Esophagus squamous epithelium (tissue), 5 donors: ENCODE measurements at regions of chr6 and their contacts with region 1.

Region 1: GRCh38 chr6:157756708-157757429 is 66.2 kb upstream of the SNX9 start:
- DNase-seq: peak; percentile 26
- H3K4me3 ChIP-seq: peak overlapping the region in 1 of 4 donors; percentile 37
- H3K27ac ChIP-seq: peak overlapping the region in 3 of 4 donors; percentile 48 to 52 (median 50)
- H3K4me1 ChIP-seq: peaks cover 6 to 37% (median 22%) of the 10 kb centered on the region in 3 donors
- H3K27me3 ChIP-seq: peaks cover 0 to 24% (median 0%) of the 10 kb centered on the region in 4 donors
- CTCF ChIP-seq: peak; percentile 80 to 89 (median 84)
- POLR2A ChIP-seq: no peak

Region 2: DNA sequence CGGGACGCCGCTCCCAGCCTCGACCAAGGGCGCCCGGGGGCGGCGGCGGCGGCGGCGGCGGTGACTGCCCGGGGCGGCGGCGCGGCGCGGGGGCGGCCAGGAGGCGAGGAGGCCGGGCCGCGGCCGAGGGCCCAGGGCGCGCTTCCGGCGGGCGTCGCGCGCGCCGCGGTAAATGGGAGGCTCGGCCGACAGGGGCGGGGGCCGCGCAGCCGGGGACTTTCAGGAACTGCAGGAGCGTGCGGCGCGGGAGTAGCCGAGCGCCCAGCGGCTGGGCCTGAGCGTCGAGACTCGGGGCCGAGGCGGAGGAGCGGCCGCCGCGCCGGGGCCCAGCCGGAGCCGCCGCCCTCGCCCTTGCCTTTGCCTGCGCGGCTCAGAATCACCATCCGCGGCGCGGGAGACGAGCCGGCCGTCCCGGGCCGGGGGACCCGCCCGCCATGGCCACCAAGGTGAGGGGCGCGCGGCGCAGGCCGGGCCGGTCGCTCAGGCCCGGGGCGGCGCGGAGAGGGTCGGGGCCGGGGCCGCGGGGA is 66.2 kb after region 1 on chr6 and contains the start of gene SNX9:
- intact Hi-C with region 1: loop called (anchors 10 kb)
- DNase-seq: no peak
- H3K4me3 ChIP-seq: peak within 1 kb of the TSS; percentile 79 to 99 (median 98)
- H3K27ac ChIP-seq: peak within 1 kb of the TSS; percentile 91 to 99 (median 96)
- H3K4me1 ChIP-seq: peaks cover 11 to 29% (median 15%) of the 10 kb centered on the region in 3 donors
- H3K27me3 ChIP-seq: no peaks in the 10 kb centered on the region
- CTCF ChIP-seq: peak in 2 of 6 experiments; percentile 36 to 43
- POLR2A ChIP-seq: peak in 3 of 4 donors; percentile 39 to 91 (median 83)
- total RNA-seq, gene SNX9: 19.9 to 39.9 (median 33.5) TPM

Region 3: DNA sequence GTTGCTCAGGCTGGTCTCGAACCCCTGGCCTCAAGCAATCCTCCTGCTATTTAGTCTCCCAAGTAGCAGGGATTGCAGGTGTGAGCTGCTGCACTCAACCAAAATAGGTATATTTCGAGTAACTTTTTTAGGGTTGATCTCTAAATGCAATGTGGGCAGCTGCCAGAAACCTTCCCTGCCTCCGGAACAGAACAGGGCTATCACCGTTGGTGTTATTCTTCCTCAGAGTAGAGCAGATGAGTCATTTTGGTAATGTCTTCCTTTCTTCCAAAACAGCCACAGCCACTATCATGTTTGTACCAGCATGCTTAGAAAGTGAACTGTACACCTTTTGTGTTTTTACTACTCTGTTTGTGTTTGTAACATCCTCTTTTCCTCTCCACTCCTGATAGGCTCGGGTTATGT is 110.3 kb after region 1 on chr6:
- intact Hi-C with region 1: loop called (anchors 5 kb)
- DNase-seq: no peak
- H3K4me3 ChIP-seq: no peak overlapping the region
- H3K27ac ChIP-seq: no peak overlapping the region
- H3K4me1 ChIP-seq: peaks cover 0 to 34% (median 15%) of the 10 kb centered on the region in 3 donors
- H3K27me3 ChIP-seq: no peaks in the 10 kb centered on the region
- CTCF ChIP-seq: no peak
- POLR2A ChIP-seq: no peak